Activated T-helper 1 cell treated with anti-CD3 and anti-CD28 coated beads, Interleukin-12 subunit alpha, Interleukin-12 subunit beta, Interleukin-2, Interleukin-4 antibody, amounts not matched to agents 30 ng/mL and 10 ng/mL and 1 ng/mL, durations not matched to agents 14 hours and 24 hours and 36 hours (primary cell): ENCODE measurements at regions of chr10 and their contacts with region 1.

Region 1: DNA sequence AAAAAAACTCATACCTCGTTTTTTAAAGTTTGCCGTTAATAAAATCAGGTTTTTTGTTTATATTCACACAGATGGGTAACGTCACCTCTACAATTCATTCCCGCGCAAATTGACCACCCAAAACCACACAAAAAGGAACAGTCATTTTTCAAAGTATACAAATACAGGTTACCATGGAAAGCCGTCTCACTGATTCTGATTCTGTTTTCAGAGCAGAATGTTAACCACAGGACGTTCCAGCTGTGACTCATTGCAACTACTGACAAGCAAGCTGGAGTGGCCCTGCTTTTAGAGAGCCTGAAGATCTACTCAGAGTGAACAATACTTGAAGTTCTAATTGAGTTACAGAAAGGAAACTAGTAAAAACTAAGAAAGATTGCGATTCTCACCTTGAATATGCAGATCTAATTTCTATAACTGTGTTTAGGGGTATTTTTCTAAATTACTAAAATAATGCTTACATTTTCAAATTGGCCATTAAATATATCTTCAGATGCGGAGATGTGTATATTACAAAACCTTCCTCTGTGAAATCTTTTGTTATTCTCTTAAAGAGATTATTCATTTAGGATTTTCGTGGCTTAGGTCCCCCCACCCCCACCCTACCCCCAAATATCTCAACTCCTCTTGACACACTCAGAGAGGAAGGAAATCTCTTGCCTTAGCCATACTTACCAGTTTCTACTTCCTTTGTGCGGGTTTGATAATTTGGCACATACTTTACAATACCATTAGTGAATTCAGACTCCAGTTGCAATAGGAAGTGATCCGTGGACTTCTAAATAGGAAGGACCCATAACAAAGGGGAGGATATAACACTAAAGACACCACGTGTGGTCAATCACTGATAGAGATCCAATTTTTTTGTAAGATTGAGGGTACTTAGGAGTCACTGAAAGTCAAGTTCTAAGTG is 106.0 kb downstream of the CUBN start:
- DNase-seq: peak; percentile 77
- H3K4me3 Mint-ChIP-seq: peak overlapping the region; percentile 61
- H3K27ac Mint-ChIP-seq: peak overlapping the region; percentile 99
- H3K4me1 Mint-ChIP-seq: peaks cover 61% of the 10 kb centered on the region
- H3K27me3 Mint-ChIP-seq: peaks cover 4% of the 10 kb centered on the region

Region 2: DNA sequence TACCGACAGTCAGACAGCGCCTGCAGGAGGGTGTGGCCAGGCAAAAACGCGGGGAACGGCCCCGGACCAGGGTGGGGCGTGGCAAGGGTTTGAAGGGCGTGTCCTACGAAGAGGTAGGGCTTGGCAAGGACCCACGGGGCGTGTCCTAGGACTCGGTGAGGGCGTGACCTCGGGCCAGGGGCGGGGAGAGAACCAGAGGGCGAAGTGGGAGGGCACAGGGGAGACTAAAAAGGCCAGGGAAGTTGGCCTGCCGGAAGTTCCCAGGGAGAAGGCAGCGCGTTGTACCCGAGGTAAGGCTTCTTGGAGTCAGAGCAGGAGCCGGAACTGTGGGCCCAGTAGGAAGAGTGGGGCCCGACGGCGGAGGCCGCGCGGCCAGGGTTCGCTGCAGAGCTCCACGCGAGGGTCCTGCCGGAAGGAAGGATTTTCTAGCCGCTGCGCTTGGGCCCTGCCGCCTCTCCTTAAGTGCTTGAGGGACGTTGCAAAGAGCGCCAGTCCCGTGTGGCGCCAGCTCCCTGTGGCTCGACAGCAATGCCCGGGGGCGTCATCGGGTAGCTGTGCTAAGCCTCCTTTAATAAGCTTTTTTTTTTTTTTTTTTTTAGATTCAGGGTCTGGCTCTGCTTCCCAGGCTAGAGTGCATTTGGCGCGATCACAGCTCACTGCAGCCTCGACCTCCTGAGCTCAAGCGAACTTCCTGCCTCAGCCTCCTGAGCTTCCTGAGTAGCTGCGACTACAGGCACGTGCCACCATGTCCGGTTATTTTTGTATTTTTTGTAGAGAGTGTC is 586.7 kb before region 1 on chr10 and contains the start of gene PTER:
- intact Hi-C with region 1: loop called (anchors 10 kb)
- DNase-seq: peak; percentile 98
- H3K4me3 Mint-ChIP-seq: peak within 1 kb of the TSS; percentile 88
- H3K27ac Mint-ChIP-seq: peak within 1 kb of the TSS; percentile 88
- H3K4me1 Mint-ChIP-seq: peaks cover 40% of the 10 kb centered on the region
- H3K27me3 Mint-ChIP-seq: peaks cover 9% of the 10 kb centered on the region
- total RNA-seq, gene PTER: 10.7 and 12.6 TPM in 2 replicates

Region 3: DNA sequence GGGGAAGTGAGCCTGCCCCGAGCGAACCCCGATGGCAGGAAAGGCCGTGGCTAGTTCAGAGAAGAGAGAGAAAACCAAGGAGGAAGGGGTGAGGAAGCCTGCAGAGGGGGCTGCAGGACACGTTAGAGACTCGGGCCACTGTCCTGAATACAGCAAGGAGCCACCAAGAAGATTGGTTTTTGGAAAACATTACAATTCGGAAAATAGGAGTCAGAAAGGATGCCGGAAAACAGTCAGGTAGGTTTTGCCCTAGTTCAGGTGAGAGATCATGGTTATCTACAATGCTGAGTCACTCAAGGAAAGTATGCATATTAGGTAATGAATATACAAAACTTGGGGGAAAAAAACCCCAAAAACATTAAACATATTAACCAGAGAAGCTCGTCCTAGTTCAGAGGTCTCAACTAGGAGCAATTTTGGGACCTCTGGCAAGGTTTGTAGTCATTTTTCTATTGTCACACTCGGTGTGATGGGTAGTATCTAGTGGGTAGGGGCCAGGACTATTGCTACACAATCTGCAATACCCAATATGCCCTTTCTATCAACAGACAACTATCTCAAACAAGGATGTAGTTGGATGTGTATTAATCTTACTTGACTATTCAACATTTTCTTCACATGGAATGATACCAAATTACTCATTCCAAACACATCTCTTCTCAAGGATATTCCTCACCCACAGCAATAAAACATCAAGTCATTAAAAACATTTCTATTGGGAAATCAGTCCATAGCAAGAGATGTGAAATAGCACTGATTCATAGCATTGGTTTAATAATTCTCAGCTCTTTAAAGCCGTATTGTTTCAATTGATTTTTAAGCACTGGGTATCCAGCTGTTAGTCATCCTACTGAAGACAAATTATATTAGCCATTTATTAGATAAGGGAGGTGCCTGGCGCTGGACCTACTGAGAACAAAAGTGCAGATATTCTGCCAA is 132.0 kb before region 1 on chr10:
- intact Hi-C with region 1: loop called (anchors 1 kb)
- DNase-seq: no peak
- H3K4me3 Mint-ChIP-seq: no peak overlapping the region
- H3K27ac Mint-ChIP-seq: no peak overlapping the region
- H3K4me1 Mint-ChIP-seq: peaks cover 10% of the 10 kb centered on the region
- H3K27me3 Mint-ChIP-seq: peaks cover 9% of the 10 kb centered on the region

Region 4: DNA sequence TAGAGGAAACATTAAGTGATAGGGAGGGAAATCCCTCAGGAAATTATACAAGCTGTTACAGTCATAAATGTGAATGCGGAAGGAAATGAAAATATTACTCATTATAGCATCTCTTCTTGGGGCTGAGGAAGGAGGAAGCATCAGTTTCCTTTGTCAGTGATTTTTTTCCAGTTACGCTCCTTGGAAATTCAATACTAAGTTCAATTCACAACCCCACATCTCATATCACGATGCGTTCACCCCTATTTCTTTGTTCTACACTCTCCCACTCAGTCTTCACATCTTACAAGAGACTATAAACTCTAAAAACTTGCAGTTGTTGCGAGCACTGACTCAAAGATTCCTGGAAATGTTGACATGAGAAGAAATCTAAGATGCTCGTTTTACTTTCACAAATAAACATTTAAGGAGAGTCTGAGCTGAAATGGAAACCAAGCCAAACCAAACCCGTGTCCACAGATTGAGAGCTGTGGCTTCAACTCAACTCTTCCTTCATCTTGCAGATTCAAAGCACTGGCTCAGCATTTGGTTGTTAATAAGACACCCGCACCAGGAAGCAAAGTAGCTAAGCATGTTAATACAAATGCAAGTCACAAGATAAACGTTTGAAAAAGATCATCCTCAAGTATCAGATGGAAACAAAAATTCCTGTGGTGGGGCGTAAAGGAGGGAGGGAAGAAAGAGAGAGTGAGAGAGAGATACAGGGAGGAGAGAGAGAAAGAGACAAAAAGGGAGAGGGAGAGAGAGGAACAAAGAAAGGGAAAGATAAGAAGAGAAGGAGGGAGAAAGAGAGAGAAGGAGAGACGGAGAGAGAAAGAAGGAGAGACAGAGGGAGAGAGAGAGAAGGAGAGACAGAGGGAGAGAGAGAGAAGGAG is 56.4 kb before region 1 on chr10:
- intact Hi-C with region 1: loop called (anchors 1 kb)
- DNase-seq: no peak
- H3K4me3 Mint-ChIP-seq: peak overlapping the region; percentile 2
- H3K27ac Mint-ChIP-seq: peak overlapping the region; percentile 34
- H3K4me1 Mint-ChIP-seq: peaks cover 24% of the 10 kb centered on the region
- H3K27me3 Mint-ChIP-seq: peaks cover 22% of the 10 kb centered on the region

Region 5: GRCh38 chr10:17144757-17145156 is 121.1 kb after region 1 on chr10:
- intact Hi-C with region 1: loop called (anchors 1 kb)
- DNase-seq: peak; percentile 31
- H3K4me3 Mint-ChIP-seq: no peak overlapping the region
- H3K27ac Mint-ChIP-seq: peak overlapping the region; percentile 45
- H3K4me1 Mint-ChIP-seq: peaks cover 19% of the 10 kb centered on the region
- H3K27me3 Mint-ChIP-seq: no peaks in the 10 kb centered on the region

Region 6: GRCh38 chr10:17643755-17644484 is 620.3 kb after region 1 on chr10 and contains the start of gene STAM:
- intact Hi-C with region 1: loop called (anchors 10 kb)
- DNase-seq: peak; percentile 87
- H3K4me3 Mint-ChIP-seq: peak within 1 kb of the TSS; percentile 99
- H3K27ac Mint-ChIP-seq: peak within 1 kb of the TSS; percentile 100
- H3K4me1 Mint-ChIP-seq: peaks cover 55% of the 10 kb centered on the region
- H3K27me3 Mint-ChIP-seq: no peaks in the 10 kb centered on the region
- total RNA-seq, gene STAM: 23.3 and 26.8 TPM in 2 replicates